ENCODE measurements at regions of chr1 and their contacts with region 1.

Region 1: DNA sequence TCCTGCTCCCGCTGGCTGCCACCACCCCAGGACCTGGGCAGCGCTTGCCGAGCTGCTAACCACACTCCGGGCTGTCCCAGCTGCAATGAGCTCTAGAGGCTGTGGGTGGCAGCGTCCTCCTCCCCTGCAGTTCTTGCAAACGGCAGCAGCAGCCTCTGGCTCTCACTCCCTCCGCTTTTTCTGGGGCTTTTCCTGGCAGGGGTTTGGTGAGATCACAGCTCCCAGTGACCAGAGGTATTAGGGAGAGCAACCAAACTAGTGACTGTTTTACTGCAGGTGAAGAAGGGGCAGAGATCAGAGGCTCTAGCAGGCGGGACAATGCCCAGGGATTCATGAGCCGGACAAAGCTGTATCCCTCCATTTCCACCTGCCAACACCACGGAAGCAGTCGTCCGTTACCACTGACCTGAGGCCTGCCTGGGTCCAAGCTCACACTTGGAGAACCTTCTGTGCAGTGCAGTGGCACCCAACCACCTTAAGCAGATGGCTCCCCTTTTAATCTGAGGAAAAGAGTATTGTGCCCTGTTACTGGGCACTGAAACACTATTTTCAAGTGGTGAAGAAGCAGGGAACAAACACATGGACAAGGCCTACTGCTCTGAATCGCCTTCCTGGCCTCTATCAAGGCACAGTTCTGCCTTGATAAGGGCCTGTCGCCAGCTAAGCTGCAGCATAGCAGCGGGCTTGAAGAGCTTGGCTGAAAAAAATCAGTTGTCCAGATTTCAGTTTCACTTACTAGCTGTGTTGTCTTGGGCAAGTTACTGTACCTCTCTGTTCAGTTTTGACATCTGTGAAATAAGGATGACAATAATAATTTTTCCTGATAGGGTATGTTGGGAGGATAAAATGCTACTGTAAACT is at the start of gene F5:
- DNase-seq: peak; percentile 71
- H3K4me3 Mint-ChIP-seq: peak within 1 kb of the TSS; percentile 96
- H3K27ac Mint-ChIP-seq: peak within 1 kb of the TSS; percentile 91
- H3K4me1 Mint-ChIP-seq: peaks cover 81% of the 10 kb centered on the region
- H3K27me3 Mint-ChIP-seq: no peaks in the 10 kb centered on the region
- total RNA-seq, gene F5: 58.0 and 58.2 TPM in 2 replicates

Region 2: GRCh38 chr1:169601093-169601881 is 14.7 kb after region 1 on chr1:
- intact Hi-C with region 1: loop called (anchors 1 kb)
- DNase-seq: no peak
- H3K4me3 Mint-ChIP-seq: no peak overlapping the region
- H3K27ac Mint-ChIP-seq: peak overlapping the region; percentile 57
- H3K4me1 Mint-ChIP-seq: peaks cover 51% of the 10 kb centered on the region
- H3K27me3 Mint-ChIP-seq: no peaks in the 10 kb centered on the region

Region 3: GRCh38 chr1:169794530-169795416 is 208.1 kb after region 1 on chr1 and contains the start of gene METTL18:
- intact Hi-C with region 1: loop called (anchors 1 kb)
- DNase-seq: peak; percentile 90
- H3K4me3 Mint-ChIP-seq: peak within 1 kb of the TSS; percentile 87
- H3K27ac Mint-ChIP-seq: peak within 1 kb of the TSS; percentile 86
- H3K4me1 Mint-ChIP-seq: peaks cover 55% of the 10 kb centered on the region
- H3K27me3 Mint-ChIP-seq: no peaks in the 10 kb centered on the region
- total RNA-seq, gene METTL18: 9.0 and 9.3 TPM in 2 replicates

Region 4: DNA sequence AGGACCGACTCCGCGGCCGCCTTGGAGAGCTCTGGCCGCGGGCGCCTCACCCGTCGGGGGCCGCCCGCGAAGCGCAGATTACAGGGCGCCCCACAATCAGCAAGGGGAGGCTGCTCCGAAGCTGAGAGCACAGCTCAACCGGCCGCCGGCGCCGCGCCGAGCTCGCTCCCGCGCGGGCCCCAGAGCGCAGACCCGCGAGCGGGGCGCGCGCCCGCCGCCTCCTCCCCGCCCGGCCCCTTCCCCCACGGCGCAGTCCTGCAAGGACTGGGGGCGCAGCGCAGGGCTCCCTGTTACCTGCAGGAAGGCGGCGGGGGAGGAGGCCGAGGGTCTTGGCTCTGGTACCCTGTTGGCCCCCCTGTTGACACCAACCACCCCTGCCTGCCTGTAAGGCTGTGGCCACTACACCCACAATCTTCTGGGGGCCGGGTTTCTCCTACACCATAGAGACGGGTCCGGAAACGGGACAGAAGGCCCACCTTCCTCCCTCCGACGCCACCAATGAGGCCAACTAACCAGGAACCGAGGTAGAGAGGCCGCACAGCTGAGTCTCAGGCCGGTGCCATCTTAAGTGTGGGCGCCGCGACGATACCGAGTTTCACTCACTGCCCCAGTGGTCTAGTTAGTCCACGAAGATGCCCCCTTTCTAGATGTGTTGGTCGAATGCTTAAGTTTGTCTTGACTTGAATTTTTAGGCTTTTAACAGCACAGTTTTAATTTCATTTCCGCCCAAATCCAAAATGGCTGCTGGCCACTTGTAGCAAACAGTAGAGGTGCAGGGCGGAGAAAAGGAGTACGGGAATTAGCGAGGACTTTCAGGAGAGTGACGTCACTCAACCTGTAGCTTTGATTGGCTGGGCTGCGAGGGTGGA is 307.1 kb after region 1 on chr1 and contains the start of gene SCYL3:
- intact Hi-C with region 1: loop called (anchors 1 kb)
- DNase-seq: peak; percentile 86
- H3K4me3 Mint-ChIP-seq: peak within 1 kb of the TSS; percentile 86
- H3K27ac Mint-ChIP-seq: peak within 1 kb of the TSS; percentile 100
- H3K4me1 Mint-ChIP-seq: peaks cover 51% of the 10 kb centered on the region
- H3K27me3 Mint-ChIP-seq: peaks cover 12% of the 10 kb centered on the region
- total RNA-seq, gene SCYL3: 11.8 and 12.3 TPM in 2 replicates

Measured in activated T-helper 1 cell treated with anti-CD3 and anti-CD28 coated beads, Interleukin-12 subunit alpha, Interleukin-12 subunit beta, Interleukin-2, Interleukin-4 antibody, amounts not matched to agents 30 ng/mL and 10 ng/mL and 1 ng/mL, durations not matched to agents 14 hours and 24 hours and 36 hours (primary cell).